ENCODE measurements at regions of chr2 and their contacts with region 1.

Region 1: DNA sequence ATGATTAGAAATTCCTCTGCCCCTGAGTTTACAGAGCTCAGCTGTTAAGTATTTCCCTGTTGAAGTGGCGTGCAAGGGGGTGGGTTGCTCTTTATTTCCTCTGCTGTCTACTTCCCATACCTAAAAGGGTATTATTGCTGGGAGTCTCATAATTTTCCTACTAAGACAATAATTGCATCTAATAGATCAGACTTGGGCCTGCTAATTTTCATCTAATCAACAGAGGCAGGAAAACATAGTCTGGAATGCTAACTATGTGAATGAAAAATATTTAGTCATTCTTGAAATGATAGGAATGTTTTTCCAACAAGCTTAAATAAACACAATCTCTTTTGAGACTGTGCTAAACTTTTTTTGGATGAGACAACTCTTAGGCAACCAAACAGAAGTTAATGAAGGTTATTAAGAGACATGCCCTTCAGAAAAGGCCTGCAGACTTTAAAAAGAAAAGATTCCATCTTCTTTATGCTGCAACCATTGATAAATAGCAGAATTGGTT is 111.4 kb downstream of the FEZ2 start:
- DNase-seq: peak; percentile 49
- H3K4me3 ChIP-seq: no peak overlapping the region
- H3K27ac ChIP-seq: peak overlapping the region; percentile 88
- H3K27me3 ChIP-seq: no peaks in the 10 kb centered on the region
- CTCF ChIP-seq: no peak

Region 2: GRCh38 chr2:35378791-35379190 is 1107.8 kb before region 1 on chr2:
- CTCF ChIA-PET with region 1: no interaction called
- POLR2A ChIA-PET with region 1: no interaction called
- DNase-seq: no peak
- H3K4me3 ChIP-seq: no peak overlapping the region
- H3K27ac ChIP-seq: no peak overlapping the region
- H3K27me3 ChIP-seq: no peaks in the 10 kb centered on the region
- CTCF ChIP-seq: no peak

Region 3: DNA sequence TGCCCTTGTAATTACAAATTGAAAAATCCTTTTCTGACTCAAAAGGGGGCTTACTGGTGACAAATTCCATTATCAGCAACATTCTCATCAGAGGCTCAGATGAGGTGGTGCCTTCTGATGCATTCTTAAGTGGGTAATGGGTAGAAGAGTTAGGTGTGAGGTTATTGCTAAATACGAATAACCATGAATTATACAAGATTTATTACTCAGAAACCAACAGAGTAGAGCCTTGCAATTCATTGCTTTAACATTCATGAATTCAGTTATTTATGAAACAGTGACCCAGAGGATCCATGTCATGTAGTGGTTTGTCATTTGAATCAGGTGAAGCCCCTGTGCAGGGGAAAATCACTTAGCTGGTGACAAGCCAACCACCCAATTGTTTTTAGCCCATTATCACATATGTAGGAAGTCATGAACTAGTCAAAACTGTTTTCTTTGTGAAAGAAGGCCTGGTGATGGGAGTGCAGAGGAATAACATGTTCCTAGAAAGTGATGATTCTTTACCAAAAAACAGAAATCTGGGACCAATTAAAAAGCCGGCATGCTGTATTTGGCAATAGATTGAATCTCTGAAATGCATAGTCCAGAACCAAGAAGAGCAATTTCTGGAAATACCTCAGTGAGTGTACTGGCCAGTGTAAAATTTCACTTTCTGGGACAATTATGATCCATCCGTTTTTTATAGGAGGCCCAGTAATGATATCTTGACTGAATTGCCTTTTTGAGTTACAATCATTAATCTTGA is 60.8 kb before region 1 on chr2:
- CTCF ChIA-PET with region 1: no interaction called
- POLR2A ChIA-PET with region 1: no interaction called
- DNase-seq: no peak
- H3K4me3 ChIP-seq: no peak overlapping the region
- H3K27ac ChIP-seq: no peak overlapping the region
- H3K27me3 ChIP-seq: no peaks in the 10 kb centered on the region
- CTCF ChIP-seq: no peak

Region 4: DNA sequence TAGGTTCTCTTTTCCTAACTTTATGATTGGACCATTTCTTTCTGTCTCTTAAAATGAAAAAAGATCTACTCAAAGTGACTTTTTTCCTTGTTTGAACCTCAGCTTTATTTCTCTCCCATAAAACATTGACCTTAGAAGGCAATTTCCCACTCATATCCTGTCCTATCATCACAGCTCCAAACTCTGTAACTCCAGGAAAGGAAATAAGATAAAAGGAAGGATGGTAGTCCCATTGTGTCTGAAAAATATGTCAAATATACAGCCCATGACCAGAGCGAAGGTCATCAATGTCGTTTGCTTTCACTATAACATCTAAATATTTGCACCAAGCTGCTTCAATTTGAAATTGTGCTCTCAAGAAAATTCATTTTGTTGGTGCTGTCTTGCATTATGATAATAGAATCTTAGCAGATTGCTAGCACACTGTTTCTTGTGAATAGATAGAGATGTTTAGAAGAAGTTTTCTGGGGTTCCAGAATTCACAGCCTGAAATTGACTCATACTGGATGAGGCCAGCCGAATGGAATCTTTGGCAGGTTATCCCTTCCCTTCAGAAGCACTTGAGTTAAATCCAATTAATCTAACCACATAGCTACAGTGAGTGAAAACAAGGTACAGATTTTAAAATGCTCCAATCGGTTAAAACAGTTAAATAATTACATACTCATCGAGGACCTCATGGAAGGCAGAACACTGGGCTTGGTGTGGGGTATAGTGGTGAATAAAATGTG is 36.0 kb before region 1 on chr2:
- CTCF ChIA-PET with region 1: no interaction called
- POLR2A ChIA-PET with region 1: interaction called, 20 read pairs
- DNase-seq: no peak
- H3K4me3 ChIP-seq: no peak overlapping the region
- H3K27ac ChIP-seq: peak overlapping the region; percentile 48
- H3K27me3 ChIP-seq: no peaks in the 10 kb centered on the region
- CTCF ChIP-seq: no peak

Region 5: DNA sequence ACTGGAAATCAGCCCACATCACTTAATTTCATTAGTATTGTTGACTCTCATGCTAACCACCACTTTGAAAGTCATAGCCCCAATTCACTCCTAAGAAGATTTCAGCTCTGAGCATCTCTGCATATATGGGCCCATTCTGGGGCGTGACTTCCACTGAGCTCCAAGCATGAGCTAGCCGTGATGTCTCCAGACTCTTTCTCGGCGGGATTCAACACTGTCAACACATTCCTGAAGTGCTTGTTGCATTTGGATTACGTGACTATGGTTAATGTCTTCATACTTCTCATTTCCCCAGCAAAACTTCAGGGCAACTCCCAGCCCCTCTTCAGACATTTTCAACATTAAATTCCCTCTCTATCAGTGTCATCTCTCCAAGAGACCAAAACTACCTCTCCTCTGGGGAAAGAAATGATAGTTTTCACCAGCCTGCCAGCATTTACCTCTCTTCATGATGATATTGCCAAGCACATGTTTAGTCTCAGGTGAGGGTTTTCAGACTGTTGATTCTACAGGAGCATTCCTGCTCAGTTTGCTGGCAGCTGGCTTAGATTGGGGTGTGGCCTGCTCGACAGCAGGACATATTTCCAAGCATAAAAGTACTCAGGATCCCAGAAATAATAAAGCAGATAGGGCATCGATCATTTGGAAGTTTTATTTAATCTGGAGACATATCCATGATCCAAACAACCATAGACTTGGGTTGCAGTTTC is 29.7 kb after region 1 on chr2:
- CTCF ChIA-PET with region 1: no interaction called
- POLR2A ChIA-PET with region 1: no interaction called
- DNase-seq: no peak
- H3K4me3 ChIP-seq: no peak overlapping the region
- H3K27ac ChIP-seq: peak overlapping the region; percentile 34
- H3K27me3 ChIP-seq: no peaks in the 10 kb centered on the region
- CTCF ChIP-seq: no peak

Measured in AG04450 (cell line).